ENCODE measurements at regions of chr6 and their contacts with region 1.

Region 1: DNA sequence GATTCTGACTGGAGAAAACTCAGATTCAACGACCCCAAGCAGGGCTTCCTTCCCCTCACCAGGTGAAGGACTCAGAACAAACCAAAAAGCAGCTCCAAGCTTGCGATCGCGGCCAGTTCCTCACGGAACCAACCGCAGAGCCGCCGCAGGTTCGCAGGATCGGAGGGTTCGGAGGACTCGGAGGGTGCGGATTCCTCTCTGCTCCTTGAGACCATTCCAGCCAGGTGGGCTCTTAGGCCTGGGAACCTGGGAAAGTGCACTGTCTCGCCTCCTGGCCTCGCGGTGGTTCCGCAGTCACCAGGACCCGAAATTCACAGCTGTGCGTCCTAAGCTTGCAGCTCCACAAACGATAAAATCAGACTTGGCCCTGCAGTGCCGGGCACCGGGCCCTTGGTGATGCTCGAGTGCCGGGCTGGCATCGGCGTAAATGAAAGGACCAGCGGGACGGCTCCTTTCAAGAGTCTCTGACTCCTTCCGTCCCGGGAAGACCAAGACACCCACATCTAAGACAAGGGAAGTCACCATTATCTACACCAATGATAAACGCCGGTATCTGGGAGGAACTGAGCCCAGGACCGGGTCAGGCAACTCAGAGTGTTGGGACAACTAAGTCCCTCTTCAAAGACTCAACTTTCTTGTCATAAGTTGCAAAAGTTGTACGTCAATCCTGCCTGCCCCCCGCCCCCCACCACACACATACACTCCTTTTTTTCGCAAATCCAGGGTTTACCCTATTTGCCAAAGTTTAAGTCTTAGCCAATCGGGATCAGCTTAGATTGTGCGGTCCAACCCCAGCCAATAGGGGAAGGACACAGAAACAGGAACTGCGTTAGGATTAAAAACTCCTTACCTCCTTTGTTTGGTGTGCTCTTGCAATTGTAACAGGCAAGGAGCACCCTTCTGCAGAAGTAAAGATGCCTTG is 69.8 kb upstream of the PRSS16 start:
- DNase-seq: peak; percentile 68 to 80 (median 70)
- H3K4me3 ChIP-seq: peak overlapping the region; percentile 98
- H3K4me3 Mint-ChIP-seq: peak overlapping the region; percentile 95 to 99 (median 98)
- H3K27ac ChIP-seq: peak overlapping the region; percentile 77
- H3K27ac Mint-ChIP-seq: peak overlapping the region; percentile 86 to 100 (median 93)
- H3K4me1 ChIP-seq: peaks cover 7% of the 10 kb centered on the region
- H3K4me1 Mint-ChIP-seq: peaks cover 5 to 29% (median 13%) of the 10 kb centered on the region in 4 donors
- H3K27me3 ChIP-seq: no peaks in the 10 kb centered on the region
- H3K27me3 Mint-ChIP-seq: peaks cover 3 to 4% of the 10 kb centered on the region in 2 donors

Region 2: GRCh38 chr6:27157459-27158315 is 20.1 kb before region 1 on chr6:
- CTCF ChIA-PET with region 1: interaction called, 56 read pairs
- POLR2A ChIA-PET with region 1: interaction called, 6 read pairs
- intact Hi-C with region 1: loop called (anchors 2 kb)
- DNase-seq: peak; percentile 78 to 92 (median 82)
- H3K4me3 ChIP-seq: peak overlapping the region; percentile 18 to 44
- H3K4me3 Mint-ChIP-seq: peak overlapping the region; percentile 81 to 91 (median 84)
- H3K27ac ChIP-seq: no peak overlapping the region
- H3K27ac Mint-ChIP-seq: peak overlapping the region; percentile 68 to 95 (median 85)
- H3K4me1 ChIP-seq: peaks cover 30% of the 10 kb centered on the region
- H3K4me1 Mint-ChIP-seq: peaks cover 21 to 46% (median 38%) of the 10 kb centered on the region in 4 donors
- H3K27me3 ChIP-seq: no peaks in the 10 kb centered on the region
- H3K27me3 Mint-ChIP-seq: peaks cover 0 to 4% of the 10 kb centered on the region in 2 donors

Region 3: DNA sequence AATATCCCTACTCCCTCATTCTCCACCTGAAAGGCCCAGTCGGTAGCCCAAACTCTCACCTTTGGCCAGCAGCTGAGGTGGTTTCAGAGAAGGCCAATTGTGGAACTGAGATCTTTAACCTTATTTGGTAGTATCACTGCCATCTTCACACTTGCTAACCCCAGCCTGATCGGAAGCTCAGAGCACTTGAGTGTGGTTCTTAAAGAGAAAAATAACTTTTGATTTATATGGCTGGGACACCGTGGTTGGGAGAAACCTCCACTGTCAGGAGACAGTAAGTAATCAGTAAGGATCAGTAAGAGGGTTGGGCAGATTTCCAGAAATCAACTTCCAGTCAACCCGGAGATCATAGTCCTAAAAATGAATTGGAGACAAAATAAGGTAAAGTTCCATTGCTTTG is 47.0 kb after region 1 on chr6:
- CTCF ChIA-PET with region 1: no interaction called
- POLR2A ChIA-PET with region 1: no interaction called
- intact Hi-C with region 1: no loop called
- DNase-seq: no peak
- H3K4me3 ChIP-seq: no peak overlapping the region
- H3K4me3 Mint-ChIP-seq: no peak overlapping the region
- H3K27ac ChIP-seq: no peak overlapping the region
- H3K27ac Mint-ChIP-seq: no peak overlapping the region
- H3K4me1 ChIP-seq: no peaks in the 10 kb centered on the region
- H3K4me1 Mint-ChIP-seq: peaks cover 0 to 1% (median 0%) of the 10 kb centered on the region in 4 donors
- H3K27me3 ChIP-seq: peaks cover 3% of the 10 kb centered on the region
- H3K27me3 Mint-ChIP-seq: peaks cover 45 to 47% of the 10 kb centered on the region in 2 donors

Region 4: GRCh38 chr6:27472617-27473400 is 295.1 kb after region 1 on chr6 and contains the start of gene ZNF184:
- CTCF ChIA-PET with region 1: no interaction called
- POLR2A ChIA-PET with region 1: interaction called, 16 read pairs
- intact Hi-C with region 1: no loop called
- DNase-seq: peak; percentile 86 to 90 (median 89)
- H3K4me3 ChIP-seq: peak within 1 kb of the TSS; percentile 70 to 98
- H3K4me3 Mint-ChIP-seq: peak within 1 kb of the TSS; percentile 92 to 99 (median 96)
- H3K27ac ChIP-seq: peak within 1 kb of the TSS; percentile 92
- H3K27ac Mint-ChIP-seq: peak within 1 kb of the TSS; percentile 93 to 99 (median 96)
- H3K4me1 ChIP-seq: peaks cover 56% of the 10 kb centered on the region
- H3K4me1 Mint-ChIP-seq: peaks cover 33 to 65% (median 43%) of the 10 kb centered on the region in 4 donors
- H3K27me3 ChIP-seq: no peaks in the 10 kb centered on the region
- H3K27me3 Mint-ChIP-seq: no peaks in the 10 kb centered on the region
- total RNA-seq, gene ZNF184: 15.2 to 17.4 TPM

Region 5: DNA sequence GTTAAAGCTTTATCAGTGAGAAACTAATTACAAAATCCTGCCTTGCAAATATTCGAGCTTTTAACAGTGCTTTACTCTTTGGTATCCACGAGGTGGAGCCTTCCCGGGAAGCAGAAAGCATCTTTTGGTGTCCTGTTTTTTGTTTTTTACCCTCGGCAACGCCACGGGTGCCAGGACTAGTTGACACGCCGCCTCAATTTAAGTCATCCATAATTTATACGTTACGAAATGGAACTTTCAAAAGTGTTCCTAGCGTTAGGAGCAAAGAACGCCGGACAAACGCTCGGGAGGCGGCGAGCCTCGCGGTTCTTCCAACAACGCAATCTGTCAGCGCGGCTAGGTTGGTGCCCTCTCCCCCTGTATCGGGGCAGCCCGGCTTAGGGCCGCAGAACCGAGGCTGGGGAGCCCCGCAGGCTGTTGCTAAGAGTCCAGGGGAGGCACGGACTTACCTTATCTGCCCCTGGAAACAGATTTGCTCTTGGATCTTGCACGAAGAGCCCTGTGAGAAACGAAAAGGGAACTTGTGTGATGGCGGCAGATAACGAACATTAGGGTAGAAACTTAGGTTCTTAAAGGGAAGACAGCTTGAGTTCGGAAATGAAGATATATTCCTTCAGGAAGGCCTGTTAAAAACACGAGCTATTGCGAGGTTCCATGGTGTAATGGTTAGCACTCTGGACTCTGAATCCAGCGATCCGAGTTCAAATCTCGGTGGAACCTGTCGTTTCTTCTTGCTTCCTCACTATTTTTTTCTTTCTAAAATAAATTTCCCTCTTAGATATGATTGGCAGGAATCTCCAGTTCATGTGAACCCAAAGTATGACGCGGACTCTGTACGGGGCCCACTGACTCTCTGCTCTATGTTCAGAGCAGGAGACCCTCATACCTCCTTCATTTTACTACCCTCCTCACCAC is 341.4 kb after region 1 on chr6:
- CTCF ChIA-PET with region 1: interaction called, 3 read pairs
- POLR2A ChIA-PET with region 1: no interaction called
- intact Hi-C with region 1: loop called (anchors 2 kb)
- DNase-seq: peak; percentile 63 to 72 (median 68)
- H3K4me3 ChIP-seq: peak overlapping the region; percentile 66 to 76
- H3K4me3 Mint-ChIP-seq: peak overlapping the region; percentile 87 to 93 (median 89)
- H3K27ac ChIP-seq: peak overlapping the region; percentile 64
- H3K27ac Mint-ChIP-seq: peak overlapping the region; percentile 51 to 91 (median 88)
- H3K4me1 ChIP-seq: peaks cover 9% of the 10 kb centered on the region
- H3K4me1 Mint-ChIP-seq: peaks cover 12 to 31% (median 18%) of the 10 kb centered on the region in 4 donors
- H3K27me3 ChIP-seq: no peaks in the 10 kb centered on the region
- H3K27me3 Mint-ChIP-seq: peaks cover 9 to 20% of the 10 kb centered on the region in 2 donors

Region 6: GRCh38 chr6:27772261-27773001 is 594.7 kb after region 1 on chr6:
- CTCF ChIA-PET with region 1: interaction called, 17 read pairs
- POLR2A ChIA-PET with region 1: interaction called, 3 read pairs
- intact Hi-C with region 1: no loop called
- DNase-seq: peak; percentile 82 to 85 (median 84)
- H3K4me3 ChIP-seq: no peak overlapping the region
- H3K4me3 Mint-ChIP-seq: peak overlapping the region in 5 of 8 donors; percentile 0 to 60 (median 51)
- H3K27ac ChIP-seq: no peak overlapping the region
- H3K27ac Mint-ChIP-seq: peak overlapping the region in 5 of 7 donors; percentile 4 to 80 (median 15)
- H3K4me1 ChIP-seq: peaks cover 11% of the 10 kb centered on the region
- H3K4me1 Mint-ChIP-seq: peaks cover 3 to 17% (median 9%) of the 10 kb centered on the region in 4 donors
- H3K27me3 ChIP-seq: peaks cover 5% of the 10 kb centered on the region
- H3K27me3 Mint-ChIP-seq: peaks cover 7 to 26% of the 10 kb centered on the region in 2 donors